ENCODE measurements at regions of chr12 and their contacts with region 1.

Region 1: DNA sequence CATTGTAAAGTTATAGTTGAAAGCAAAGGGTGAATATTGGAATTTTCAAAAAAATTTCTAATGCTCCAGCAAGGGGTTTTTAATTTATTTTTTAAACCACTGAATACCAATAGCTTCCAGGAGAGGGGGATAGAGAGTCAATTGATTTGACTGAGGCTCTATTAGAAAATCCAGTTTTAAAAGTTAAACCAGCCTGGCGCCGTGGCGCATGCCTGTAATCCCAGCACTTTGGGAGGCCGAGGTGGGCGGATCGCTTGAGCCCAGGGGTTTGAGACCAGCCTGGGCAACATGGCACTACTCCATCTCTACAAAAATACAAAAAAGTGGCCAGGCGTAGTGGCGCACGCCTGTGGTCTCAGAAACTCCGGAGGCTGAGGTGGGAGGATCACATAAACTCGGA is 150.1 kb downstream of the SLC38A4 start:
- DNase-seq: no peak
- ATAC-seq: peak in 3 of 4 donors; percentile 41 to 64 (median 46)
- H3K4me3 ChIP-seq: no peak overlapping the region
- H3K27ac ChIP-seq: no peak overlapping the region
- H3K4me1 ChIP-seq: peaks cover 26% of the 10 kb centered on the region
- H3K27me3 ChIP-seq: no peaks in the 10 kb centered on the region
- CTCF ChIP-seq: peak; percentile 73

Region 2: DNA sequence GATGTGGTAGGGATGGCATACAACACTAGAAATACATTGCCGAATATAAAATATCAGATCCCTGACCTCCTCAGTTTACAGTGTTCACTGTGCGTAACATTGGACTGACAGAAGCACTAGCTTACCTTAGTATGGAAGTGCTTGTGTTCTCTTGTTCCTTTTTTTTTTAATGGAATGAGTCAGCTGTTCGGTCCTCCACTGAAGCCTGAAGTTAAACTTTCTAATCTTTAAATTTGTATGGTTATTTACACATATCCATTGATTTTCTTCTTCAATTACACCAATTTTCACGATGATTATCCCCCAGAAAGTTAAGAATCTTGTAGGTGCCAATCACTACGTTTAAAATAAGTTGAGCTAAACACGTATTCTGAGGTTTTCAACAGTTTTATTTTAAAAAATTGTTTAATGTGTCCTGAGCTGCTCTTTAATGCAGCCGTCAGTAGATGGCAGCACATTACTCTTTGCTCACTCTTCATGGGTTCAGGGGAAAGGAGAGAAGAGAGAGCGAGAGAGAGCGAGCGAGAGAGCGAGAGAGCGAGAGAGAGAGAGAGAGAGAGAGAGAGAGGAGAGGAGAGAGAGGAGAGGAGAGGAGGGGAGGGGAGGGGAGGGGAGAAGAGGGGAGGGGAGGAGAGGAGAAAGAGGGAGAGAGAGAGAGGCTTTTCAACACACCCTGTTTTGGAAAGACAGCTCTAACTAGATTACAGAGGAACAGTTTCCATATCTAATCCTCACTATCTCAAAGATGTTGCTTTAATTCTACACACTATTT is 550.7 kb before region 1 on chr12:
- intact Hi-C with region 1: loop called in 1 of 2 experiments (anchors 10 kb)
- DNase-seq: no peak
- ATAC-seq: peak; percentile 89 to 99 (median 94)
- H3K4me3 ChIP-seq: peak overlapping the region; percentile 44
- H3K27ac ChIP-seq: no peak overlapping the region
- H3K4me1 ChIP-seq: no peaks in the 10 kb centered on the region
- H3K27me3 ChIP-seq: no peaks in the 10 kb centered on the region
- CTCF ChIP-seq: peak; percentile 55

Region 3: DNA sequence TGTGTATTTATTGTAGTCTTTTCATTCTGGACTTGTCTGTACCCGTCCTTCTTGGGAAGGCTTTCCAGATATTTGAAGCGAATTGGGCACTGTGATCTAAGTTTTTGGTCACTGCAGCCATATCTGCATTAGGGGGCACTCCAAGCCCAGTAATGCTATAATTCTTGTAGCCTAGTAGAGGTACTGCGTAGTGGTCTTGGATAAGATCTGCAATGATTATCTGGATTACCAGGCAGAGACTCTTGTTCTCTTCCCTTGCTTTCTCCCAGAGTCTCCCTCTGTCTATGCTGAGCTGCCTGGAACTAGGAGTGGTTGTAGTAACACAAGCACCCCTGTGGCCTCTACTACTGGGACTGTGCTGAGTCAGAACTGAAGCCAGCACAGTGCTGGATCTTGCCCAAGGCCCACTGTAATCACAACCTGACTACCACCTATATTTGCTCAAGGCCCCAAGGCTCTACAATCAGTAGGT is 333.1 kb before region 1 on chr12:
- intact Hi-C with region 1: loop called in 1 of 2 experiments (anchors 5 kb)
- DNase-seq: no peak
- ATAC-seq: peak; percentile 79 to 95 (median 86)
- H3K4me3 ChIP-seq: no peak overlapping the region
- H3K27ac ChIP-seq: no peak overlapping the region
- H3K4me1 ChIP-seq: peaks cover 9% of the 10 kb centered on the region
- H3K27me3 ChIP-seq: no peaks in the 10 kb centered on the region
- CTCF ChIP-seq: peak; percentile 69

Region 4: GRCh38 chr12:46372544-46373110 is 303.1 kb before region 1 on chr12 and contains the start of gene SLC38A2:
- intact Hi-C with region 1: loop called in 1 of 2 experiments (anchors 5 kb)
- DNase-seq: peak; percentile 97 to 99
- ATAC-seq: peak; percentile 88 to 93 (median 90)
- H3K4me3 ChIP-seq: peak within 1 kb of the TSS; percentile 94
- H3K27ac ChIP-seq: peak within 1 kb of the TSS; percentile 99
- H3K4me1 ChIP-seq: peaks cover 40% of the 10 kb centered on the region
- H3K27me3 ChIP-seq: no peaks in the 10 kb centered on the region
- CTCF ChIP-seq: no peak
- total RNA-seq, gene SLC38A2: 287 to 428 (median 331) TPM

Region 5: DNA sequence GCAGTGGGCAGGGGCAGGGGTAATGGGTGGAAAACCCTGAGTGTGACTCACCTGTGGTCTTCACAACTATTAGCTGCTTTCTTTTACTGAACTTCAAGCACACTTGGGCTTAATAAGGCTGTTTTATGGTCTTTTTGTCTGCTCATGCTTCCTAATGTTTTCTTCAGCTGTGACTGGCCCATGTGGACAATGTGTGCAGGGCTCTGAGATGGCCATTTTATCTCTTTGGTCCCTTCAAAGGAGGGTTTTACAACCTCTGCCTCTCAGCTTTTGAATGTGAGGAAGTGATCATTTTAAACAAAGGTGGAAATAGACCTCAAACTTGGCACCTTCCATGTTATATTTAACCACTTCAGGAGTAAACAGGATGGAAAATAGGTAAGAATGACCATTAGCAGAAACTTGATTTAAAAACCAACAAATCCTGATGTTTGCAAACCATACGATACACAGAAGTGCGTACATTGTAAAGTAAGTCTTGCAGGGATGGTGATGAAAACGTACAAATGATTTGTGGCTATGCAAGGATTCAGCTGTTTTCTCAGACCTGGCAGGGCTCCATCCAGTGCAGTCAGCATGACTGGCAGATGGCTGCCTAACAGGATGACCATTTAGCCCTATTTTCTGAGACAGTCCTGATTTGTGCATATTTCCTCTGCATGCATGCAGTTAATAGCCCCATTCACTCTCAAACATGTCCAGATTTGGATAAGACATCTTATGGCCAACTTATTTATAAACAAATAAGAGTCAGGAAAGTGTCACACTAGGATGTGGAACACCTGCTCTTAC is 46.9 kb after region 1 on chr12:
- intact Hi-C with region 1: no loop called
- DNase-seq: peak in 1 of 2 donors; percentile 39
- ATAC-seq: peak in 2 of 4 donors; percentile 20 to 34
- H3K4me3 ChIP-seq: no peak overlapping the region
- H3K27ac ChIP-seq: no peak overlapping the region
- H3K4me1 ChIP-seq: peaks cover 16% of the 10 kb centered on the region
- H3K27me3 ChIP-seq: no peaks in the 10 kb centered on the region
- CTCF ChIP-seq: no peak

Region 6: GRCh38 chr12:46770501-46771183 is 94.9 kb after region 1 on chr12:
- intact Hi-C with region 1: loop called in 1 of 2 experiments (anchors 10 kb)
- DNase-seq: peak in 1 of 2 donors; percentile 49
- ATAC-seq: peak; percentile 79 to 85 (median 79)
- H3K4me3 ChIP-seq: peak overlapping the region; percentile 25
- H3K27ac ChIP-seq: peak overlapping the region; percentile 84
- H3K4me1 ChIP-seq: peaks cover 51% of the 10 kb centered on the region
- H3K27me3 ChIP-seq: no peaks in the 10 kb centered on the region
- CTCF ChIP-seq: no peak

Region 7: GRCh38 chr12:46933947-46934346 is 258.2 kb after region 1 on chr12:
- intact Hi-C with region 1: loop called (anchors 2 to 5 kb)
- DNase-seq: no peak
- ATAC-seq: peak; percentile 74 to 95 (median 84)
- H3K4me3 ChIP-seq: no peak overlapping the region
- H3K27ac ChIP-seq: no peak overlapping the region
- H3K4me1 ChIP-seq: peaks cover 4% of the 10 kb centered on the region
- H3K27me3 ChIP-seq: no peaks in the 10 kb centered on the region
- CTCF ChIP-seq: peak; percentile 68

Region 8: GRCh38 chr12:47021298-47021697 is 345.6 kb after region 1 on chr12:
- intact Hi-C with region 1: loop called in 1 of 2 experiments (anchors 5 kb)
- DNase-seq: no peak
- ATAC-seq: peak in 3 of 4 donors; percentile 49 to 66 (median 55)
- H3K4me3 ChIP-seq: no peak overlapping the region
- H3K27ac ChIP-seq: no peak overlapping the region
- H3K4me1 ChIP-seq: peaks cover 3% of the 10 kb centered on the region
- H3K27me3 ChIP-seq: no peaks in the 10 kb centered on the region
- CTCF ChIP-seq: peak; percentile 73

Measured in psoas muscle (tissue), 8 donors.